ENCODE measurements at regions of chr2 and their contacts with region 1.

Region 1: DNA sequence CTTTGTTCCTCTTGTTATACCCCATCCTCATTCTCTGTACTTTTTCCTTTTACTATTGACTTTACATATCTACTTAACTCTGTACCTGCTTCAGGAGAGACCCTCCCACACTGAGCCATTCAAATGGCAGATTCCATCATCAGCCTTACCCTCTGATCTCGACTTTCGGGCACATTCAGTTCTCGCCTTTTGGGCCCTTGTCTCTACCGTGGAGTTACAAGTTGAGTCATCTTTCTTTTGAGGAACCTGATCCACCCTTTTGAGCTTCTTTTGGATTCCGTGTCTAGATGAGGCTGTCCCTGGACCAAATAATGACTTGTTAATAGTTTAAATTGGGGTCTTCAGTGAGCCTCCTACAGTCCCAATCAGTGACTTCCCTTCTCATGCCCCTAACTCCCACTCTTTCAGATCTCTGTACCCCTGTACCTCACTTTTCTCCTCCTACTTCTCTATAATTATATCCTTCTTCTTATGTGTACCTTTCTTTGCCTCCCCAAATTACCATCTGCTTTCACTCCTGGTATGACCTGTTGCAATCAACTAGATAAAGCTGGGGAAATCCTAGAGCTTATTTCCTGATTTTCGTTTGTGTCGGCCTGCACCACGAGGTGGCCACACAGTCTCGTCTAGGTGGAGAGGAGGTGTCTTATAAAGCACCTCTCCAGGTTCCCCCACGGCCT is 17.2 kb downstream of the SP110 start:
- DNase-seq: peak; percentile 60
- ATAC-seq: peak; percentile 77
- H3K4me3 ChIP-seq: 0 out of 2 replicates have a peak overlapping the region, but pooled peaks have one; percentile 2
- H3K27ac ChIP-seq: peak overlapping the region; percentile 39
- H3K4me1 ChIP-seq: peaks cover 48% of the 10 kb centered on the region
- H3K27me3 ChIP-seq: no peaks in the 10 kb centered on the region
- CTCF ChIP-seq: peak; percentile 40 to 77 (median 44); a peak in 4 of 6 replicates
- EP300 ChIP-seq: no peak
- POLR2A ChIP-seq: no peak
- RAD21 ChIP-seq: peak; percentile 76

Region 2: DNA sequence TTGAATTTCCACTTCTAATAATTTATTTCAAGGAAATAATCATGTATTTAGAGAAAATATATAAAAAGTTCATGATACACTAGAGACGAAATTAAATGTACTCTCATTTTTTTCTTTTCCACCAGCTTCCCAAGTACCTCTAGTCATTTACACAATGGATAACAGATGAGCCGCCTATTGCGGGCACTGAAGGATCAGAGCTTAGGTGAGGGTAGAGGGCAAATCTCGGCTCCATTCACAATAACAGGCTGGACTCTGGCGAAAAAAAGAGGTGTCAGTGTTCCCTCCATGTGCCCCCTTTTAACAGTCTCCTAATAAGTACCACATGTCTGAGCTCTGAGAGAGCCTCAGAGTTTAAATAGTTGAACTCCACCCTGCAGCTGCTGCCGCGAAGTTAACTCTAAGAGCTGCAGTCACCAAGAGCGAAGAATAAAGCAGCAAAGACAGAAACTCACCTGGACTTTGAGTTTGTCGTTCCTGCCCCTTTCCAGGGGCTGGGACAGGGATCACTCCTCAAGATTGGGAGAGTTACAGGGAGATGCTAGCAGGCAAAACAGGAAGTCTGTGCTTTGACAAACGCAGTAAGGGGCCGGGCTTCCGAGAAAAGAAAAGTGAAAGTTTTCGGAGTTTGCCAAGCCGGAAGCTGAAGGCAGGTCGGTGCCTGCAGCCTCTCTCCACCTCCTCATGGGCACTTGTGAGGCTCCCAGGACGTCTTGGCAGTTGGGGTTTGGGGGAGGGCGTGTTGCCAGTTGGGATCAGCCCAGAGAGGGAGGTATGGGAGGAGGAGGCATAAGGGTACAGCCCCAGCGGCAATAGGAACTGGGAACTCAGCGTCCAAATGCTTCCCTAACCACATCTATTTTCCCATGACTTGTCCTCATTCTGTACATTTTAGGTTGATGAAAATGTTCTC is 17.1 kb after region 1 on chr2 and contains the start of gene SP110:
- CTCF ChIA-PET with region 1: interaction called, 36 read pairs
- POLR2A ChIA-PET with region 1: interaction called, 10 read pairs
- RAD21 ChIA-PET with region 1: interaction called, 37 read pairs
- SMC1A ChIA-PET with region 1: interaction called, 121 read pairs
- in situ Hi-C with region 1: no loop called
- intact Hi-C with region 1: loop called (anchors 2 kb)
- DNase-seq: peak; percentile 78
- ATAC-seq: peak; percentile 81
- H3K4me3 ChIP-seq: peak within 1 kb of the TSS; percentile 82
- H3K27ac ChIP-seq: peak within 1 kb of the TSS; percentile 95
- H3K4me1 ChIP-seq: peaks cover 37% of the 10 kb centered on the region
- H3K27me3 ChIP-seq: no peaks in the 10 kb centered on the region
- CTCF ChIP-seq: no peak
- EP300 ChIP-seq: no peak
- POLR2A ChIP-seq: peak; percentile 91
- RAD21 ChIP-seq: no peak
- polyA plus RNA-seq, gene SP110: 97.3 to 103 TPM

Region 3: DNA sequence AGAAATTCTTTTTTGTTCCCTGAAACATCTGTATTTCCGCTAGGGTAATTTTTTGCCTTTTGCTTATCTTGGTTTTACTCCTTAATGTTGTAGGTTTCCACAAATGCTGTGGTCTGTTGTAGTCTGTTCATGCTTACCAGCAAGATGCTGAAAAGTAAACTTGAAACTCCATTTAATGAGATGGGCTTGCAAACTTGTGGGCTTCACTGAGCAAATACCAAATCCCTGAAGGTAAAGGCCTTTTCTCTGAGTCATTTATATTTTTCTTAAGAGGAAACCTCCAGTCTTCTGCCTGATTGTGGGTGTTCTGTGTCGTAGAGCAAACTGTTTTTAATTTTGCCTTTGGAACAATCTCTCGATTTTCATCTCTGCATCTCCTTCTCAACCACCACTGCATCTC is 32.3 kb after region 1 on chr2:
- CTCF ChIA-PET with region 1: interaction called, 3 read pairs
- POLR2A ChIA-PET with region 1: interaction called, 4 read pairs
- RAD21 ChIA-PET with region 1: interaction called, 12 read pairs
- SMC1A ChIA-PET with region 1: interaction called, 5 read pairs
- in situ Hi-C with region 1: no loop called
- intact Hi-C with region 1: loop called (anchors 2 kb)
- DNase-seq: peak; percentile 58
- ATAC-seq: peak; percentile 77
- H3K4me3 ChIP-seq: no peak overlapping the region
- H3K27ac ChIP-seq: no peak overlapping the region
- H3K4me1 ChIP-seq: peaks cover 28% of the 10 kb centered on the region
- H3K27me3 ChIP-seq: no peaks in the 10 kb centered on the region
- CTCF ChIP-seq: no peak
- EP300 ChIP-seq: peak in 1 of 2 experiments; percentile 69; a peak in 1 of 4 replicates
- POLR2A ChIP-seq: no peak
- RAD21 ChIP-seq: no peak

Region 4: GRCh38 chr2:230286048-230286447 is 83.5 kb after region 1 on chr2:
- CTCF ChIA-PET with region 1: interaction called, 7 read pairs
- POLR2A ChIA-PET with region 1: no interaction called
- RAD21 ChIA-PET with region 1: interaction called, 4 read pairs
- SMC1A ChIA-PET with region 1: interaction called, 11 read pairs
- in situ Hi-C with region 1: no loop called
- intact Hi-C with region 1: no loop called
- DNase-seq: no peak
- ATAC-seq: no peak
- H3K4me3 ChIP-seq: no peak overlapping the region
- H3K27ac ChIP-seq: no peak overlapping the region
- H3K4me1 ChIP-seq: peaks cover 9% of the 10 kb centered on the region
- H3K27me3 ChIP-seq: no peaks in the 10 kb centered on the region
- CTCF ChIP-seq: no peak
- EP300 ChIP-seq: no peak
- POLR2A ChIP-seq: no peak
- RAD21 ChIP-seq: no peak

Region 5: GRCh38 chr2:230326453-230327417 is 124.2 kb after region 1 on chr2 and contains the start of gene SP140L:
- CTCF ChIA-PET with region 1: interaction called, 3 read pairs
- POLR2A ChIA-PET with region 1: interaction called, 4 read pairs
- RAD21 ChIA-PET with region 1: interaction called, 9 read pairs
- SMC1A ChIA-PET with region 1: interaction called, 6 read pairs
- in situ Hi-C with region 1: no loop called
- intact Hi-C with region 1: loop called (anchors 5 kb)
- DNase-seq: peak; percentile 55
- ATAC-seq: peak; percentile 96
- H3K4me3 ChIP-seq: peak within 1 kb of the TSS; percentile 78
- H3K27ac ChIP-seq: peak within 1 kb of the TSS; percentile 96
- H3K4me1 ChIP-seq: no peaks in the 10 kb centered on the region
- H3K27me3 ChIP-seq: no peaks in the 10 kb centered on the region
- CTCF ChIP-seq: no peak
- EP300 ChIP-seq: no peak
- POLR2A ChIP-seq: peak; percentile 81
- RAD21 ChIP-seq: no peak
- polyA plus RNA-seq, gene SP140L: 4.7 to 6.1 TPM

Region 6: GRCh38 chr2:230447455-230448451 is 245.2 kb after region 1 on chr2:
- CTCF ChIA-PET with region 1: interaction called, 8 read pairs
- POLR2A ChIA-PET with region 1: interaction called, 3 read pairs
- RAD21 ChIA-PET with region 1: interaction called, 21 read pairs
- SMC1A ChIA-PET with region 1: interaction called, 6 read pairs
- in situ Hi-C with region 1: no loop called
- intact Hi-C with region 1: no loop called
- DNase-seq: peak; percentile 84
- ATAC-seq: peak; percentile 87
- H3K4me3 ChIP-seq: 0 out of 2 replicates have a peak overlapping the region, but pooled peaks have one; percentile 13
- H3K27ac ChIP-seq: peak overlapping the region; percentile 89
- H3K4me1 ChIP-seq: peaks cover 53% of the 10 kb centered on the region
- H3K27me3 ChIP-seq: no peaks in the 10 kb centered on the region
- CTCF ChIP-seq: no peak
- EP300 ChIP-seq: peak; percentile 80 to 84; a peak in 3 of 4 replicates
- POLR2A ChIP-seq: no peak
- RAD21 ChIP-seq: no peak

Region 7: GRCh38 chr2:230602562-230603230 is 400.1 kb after region 1 on chr2:
- CTCF ChIA-PET with region 1: interaction called, 5 read pairs
- POLR2A ChIA-PET with region 1: interaction called, 3 read pairs
- RAD21 ChIA-PET with region 1: interaction called, 14 read pairs
- SMC1A ChIA-PET with region 1: interaction called, 8 read pairs
- in situ Hi-C with region 1: loop called (anchors 5 kb)
- intact Hi-C with region 1: loop called (anchors 2 kb)
- DNase-seq: no peak
- ATAC-seq: peak; percentile 70
- H3K4me3 ChIP-seq: peak overlapping the region; percentile 32; the same call in 1 of the 2 replicates
- H3K27ac ChIP-seq: peak overlapping the region; percentile 86
- H3K4me1 ChIP-seq: peaks cover 47% of the 10 kb centered on the region
- H3K27me3 ChIP-seq: no peaks in the 10 kb centered on the region
- CTCF ChIP-seq: no peak
- EP300 ChIP-seq: no peak
- POLR2A ChIP-seq: peak; percentile 74
- RAD21 ChIP-seq: peak; percentile 16; the same call in 1 of the 2 replicates

Measured in GM12878 (cell line).